Activated CD8-positive, alpha-beta T cell treated with anti-CD3 and anti-CD28 coated beads for 36 hours (primary cell): ENCODE measurements at regions of chr9 and their contacts with region 1.

Region 1: DNA sequence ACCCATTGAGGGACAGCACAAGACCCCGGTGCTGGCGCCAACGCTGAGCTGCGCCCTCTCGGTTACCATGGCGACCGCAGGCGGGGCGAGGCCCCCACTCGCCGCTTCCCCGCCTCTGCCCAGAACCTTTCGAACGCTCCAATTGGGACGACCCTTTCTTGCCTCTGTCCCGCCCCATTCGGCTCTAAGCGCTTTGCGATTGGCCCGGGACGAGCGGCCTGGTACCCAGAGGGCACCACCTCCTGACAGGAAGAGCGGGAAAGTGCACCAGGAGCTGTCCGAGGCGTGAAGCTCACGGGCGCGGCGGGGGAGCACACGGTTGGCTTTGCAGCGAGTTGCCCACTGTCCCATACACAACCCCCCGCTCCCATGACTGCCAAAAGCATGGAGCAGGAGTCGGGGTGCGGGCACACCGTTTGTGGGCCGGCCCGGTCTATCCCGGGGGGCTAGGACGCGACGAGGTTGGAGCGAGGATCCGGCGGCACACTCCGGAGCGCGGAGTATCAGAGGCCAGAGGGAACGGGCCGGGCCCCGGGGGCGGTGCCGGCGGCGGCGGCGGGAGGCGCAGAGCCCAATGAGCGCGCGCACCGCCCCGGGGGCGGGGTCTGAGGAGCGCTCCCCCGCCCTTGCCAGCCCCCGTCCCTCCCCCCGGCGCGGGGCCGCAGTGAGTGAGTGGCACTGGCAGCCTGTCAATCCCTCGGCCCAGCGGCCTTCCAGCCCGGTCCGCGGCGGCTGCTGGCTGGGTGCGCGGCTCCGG is 978 bp upstream of the PBX3 start:
- DNase-seq: peak; percentile 92
- ATAC-seq: peak; percentile 85
- H3K4me3 Mint-ChIP-seq: peak overlapping the region; percentile 87
- H3K27ac Mint-ChIP-seq: peak overlapping the region; percentile 92
- H3K4me1 Mint-ChIP-seq: peaks cover 29% of the 10 kb centered on the region
- H3K27me3 Mint-ChIP-seq: peaks cover 3% of the 10 kb centered on the region
- CTCF ChIP-seq: no peak

Region 2: GRCh38 chr9:125650271-125650737 is 95.9 kb before region 1 on chr9:
- CTCF ChIA-PET with region 1: no interaction called
- POLR2A ChIA-PET with region 1: no interaction called
- intact Hi-C with region 1: loop called (anchors 5 kb)
- DNase-seq: peak; percentile 44
- ATAC-seq: peak; percentile 82
- H3K4me3 Mint-ChIP-seq: peak overlapping the region; percentile 36
- H3K27ac Mint-ChIP-seq: peak overlapping the region; percentile 86
- H3K4me1 Mint-ChIP-seq: peaks cover 75% of the 10 kb centered on the region
- H3K27me3 Mint-ChIP-seq: no peaks in the 10 kb centered on the region
- CTCF ChIP-seq: no peak